Colonic mucosa (tissue), 4 donors: ENCODE measurements at regions of chr6 and their contacts with region 1.

Region 1: GRCh38 chr6:33761922-33762629 is 15.4 kb upstream of the IP6K3 start:
- DNase-seq: peak; percentile 83
- H3K4me3 ChIP-seq: no peak overlapping the region
- H3K27ac ChIP-seq: no peak overlapping the region
- H3K4me1 ChIP-seq: no peaks in the 10 kb centered on the region
- H3K27me3 ChIP-seq: no peaks in the 10 kb centered on the region
- CTCF ChIP-seq: peak; percentile 73

Region 2: GRCh38 chr6:33585403-33586107 is 176.5 kb before region 1 on chr6:
- intact Hi-C with region 1: loop called (anchors 5 kb)
- DNase-seq: peak; percentile 89
- H3K4me3 ChIP-seq: no peak overlapping the region
- H3K27ac ChIP-seq: no peak overlapping the region
- H3K4me1 ChIP-seq: peaks cover 12% of the 10 kb centered on the region
- H3K27me3 ChIP-seq: no peaks in the 10 kb centered on the region
- CTCF ChIP-seq: peak; percentile 92

Region 3: GRCh38 chr6:33711140-33712129 is 50.6 kb before region 1 on chr6 and contains the start of gene UQCC2:
- intact Hi-C with region 1: loop called (anchors 5 kb)
- DNase-seq: peak; percentile 97
- H3K4me3 ChIP-seq: peak within 1 kb of the TSS; percentile 68
- H3K27ac ChIP-seq: peak within 1 kb of the TSS; percentile 80
- H3K4me1 ChIP-seq: peaks cover 7% of the 10 kb centered on the region
- H3K27me3 ChIP-seq: no peaks in the 10 kb centered on the region
- CTCF ChIP-seq: peak; percentile 55
- total RNA-seq, gene UQCC2: 45.0 to 81.7 TPM